ENCODE measurements at regions of chr12 and their contacts with region 1.

Region 1: DNA sequence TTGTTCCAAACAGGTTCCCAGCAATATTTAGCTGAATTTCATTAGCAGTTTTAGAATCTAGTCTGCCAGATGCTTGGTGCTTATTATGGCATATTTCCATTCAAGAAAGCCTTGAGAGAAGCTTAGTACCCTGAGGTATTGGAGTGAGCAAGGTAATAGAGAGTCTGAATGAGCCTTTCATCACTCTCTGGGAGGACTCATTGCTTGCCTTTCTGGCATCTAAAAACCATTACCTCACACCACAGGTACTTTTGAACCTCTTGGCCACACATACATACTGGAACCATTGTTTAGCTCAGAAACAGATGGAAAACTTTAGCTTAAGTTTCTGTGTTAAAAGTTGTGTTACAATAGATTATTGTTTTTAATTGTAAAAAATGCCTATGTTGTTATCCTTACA is 27.4 kb upstream of the KCNH3 start:
- DNase-seq: no peak
- H3K4me3 ChIP-seq: no peak overlapping the region
- H3K27ac ChIP-seq: no peak overlapping the region
- H3K4me1 ChIP-seq: no peaks in the 10 kb centered on the region
- H3K27me3 ChIP-seq: no peaks in the 10 kb centered on the region
- CTCF ChIP-seq: no peak
- POLR2A ChIP-seq: no peak

Region 2: DNA sequence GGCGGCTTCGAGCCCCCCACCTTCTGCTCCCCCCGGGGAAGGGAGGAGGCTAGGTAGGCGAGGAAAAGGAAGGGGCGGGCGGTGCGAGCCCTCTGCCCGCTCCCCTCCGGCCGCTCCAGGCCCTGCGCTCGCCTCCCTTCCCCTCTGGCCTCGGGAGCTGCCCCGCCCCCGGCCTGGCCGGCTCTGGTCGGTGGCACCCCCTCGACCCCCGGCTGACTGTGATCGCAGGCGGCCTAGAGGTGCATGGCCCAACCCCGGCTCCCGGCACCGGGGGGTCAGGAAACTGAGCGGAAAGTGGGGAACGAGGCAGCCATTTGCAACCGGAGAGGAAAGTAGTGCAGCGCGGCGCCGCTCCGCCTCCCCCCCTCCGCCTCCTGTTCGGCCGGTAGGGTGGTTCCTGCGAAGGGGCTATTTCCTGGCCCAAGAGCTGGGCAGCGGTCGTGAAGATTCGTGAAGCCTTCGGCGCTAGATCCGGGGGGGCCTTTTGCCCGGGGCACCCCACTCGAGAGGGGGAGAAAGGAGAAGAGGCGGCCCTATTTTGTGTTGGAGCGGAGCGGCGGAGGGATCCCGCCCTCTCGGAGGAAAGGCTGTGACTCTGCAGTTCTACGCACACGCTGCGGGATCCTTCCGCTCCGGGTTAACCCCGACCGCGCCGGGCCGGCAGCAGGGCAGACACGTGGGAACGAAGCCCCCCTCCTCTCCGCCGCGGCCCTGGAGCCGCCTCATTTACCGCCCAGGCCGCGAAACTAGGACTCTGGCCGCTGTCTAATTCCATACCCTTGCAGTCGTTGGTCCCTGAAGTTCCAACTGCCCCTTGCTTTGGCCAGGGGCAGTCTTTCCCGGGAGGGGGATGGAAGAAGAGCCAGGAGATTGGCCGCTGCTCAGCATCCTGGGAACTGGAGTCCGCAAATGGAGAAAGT is 450.9 kb before region 1 on chr12 and contains the start of gene KMT2D:
- intact Hi-C with region 1: no loop called
- DNase-seq: peak; percentile 89
- H3K4me3 ChIP-seq: peak within 1 kb of the TSS; percentile 78 to 88
- H3K27ac ChIP-seq: peak within 1 kb of the TSS; percentile 96 to 97
- H3K4me1 ChIP-seq: peaks cover 18% of the 10 kb centered on the region
- H3K27me3 ChIP-seq: no peaks in the 10 kb centered on the region
- CTCF ChIP-seq: peak in 3 of 4 experiments; percentile 20 to 61 (median 36)
- POLR2A ChIP-seq: peak; percentile 37
- total RNA-seq, gene KMT2D: 82.7 to 99.7 TPM

Region 3: GRCh38 chr12:49288412-49288853 is 223.0 kb before region 1 on chr12:
- intact Hi-C with region 1: loop called (anchors 5 kb)
- DNase-seq: peak; percentile 34
- H3K4me3 ChIP-seq: no peak overlapping the region
- H3K27ac ChIP-seq: no peak overlapping the region
- H3K4me1 ChIP-seq: no peaks in the 10 kb centered on the region
- H3K27me3 ChIP-seq: no peaks in the 10 kb centered on the region
- CTCF ChIP-seq: peak; percentile 51 to 85 (median 77)
- POLR2A ChIP-seq: no peak

Region 4: DNA sequence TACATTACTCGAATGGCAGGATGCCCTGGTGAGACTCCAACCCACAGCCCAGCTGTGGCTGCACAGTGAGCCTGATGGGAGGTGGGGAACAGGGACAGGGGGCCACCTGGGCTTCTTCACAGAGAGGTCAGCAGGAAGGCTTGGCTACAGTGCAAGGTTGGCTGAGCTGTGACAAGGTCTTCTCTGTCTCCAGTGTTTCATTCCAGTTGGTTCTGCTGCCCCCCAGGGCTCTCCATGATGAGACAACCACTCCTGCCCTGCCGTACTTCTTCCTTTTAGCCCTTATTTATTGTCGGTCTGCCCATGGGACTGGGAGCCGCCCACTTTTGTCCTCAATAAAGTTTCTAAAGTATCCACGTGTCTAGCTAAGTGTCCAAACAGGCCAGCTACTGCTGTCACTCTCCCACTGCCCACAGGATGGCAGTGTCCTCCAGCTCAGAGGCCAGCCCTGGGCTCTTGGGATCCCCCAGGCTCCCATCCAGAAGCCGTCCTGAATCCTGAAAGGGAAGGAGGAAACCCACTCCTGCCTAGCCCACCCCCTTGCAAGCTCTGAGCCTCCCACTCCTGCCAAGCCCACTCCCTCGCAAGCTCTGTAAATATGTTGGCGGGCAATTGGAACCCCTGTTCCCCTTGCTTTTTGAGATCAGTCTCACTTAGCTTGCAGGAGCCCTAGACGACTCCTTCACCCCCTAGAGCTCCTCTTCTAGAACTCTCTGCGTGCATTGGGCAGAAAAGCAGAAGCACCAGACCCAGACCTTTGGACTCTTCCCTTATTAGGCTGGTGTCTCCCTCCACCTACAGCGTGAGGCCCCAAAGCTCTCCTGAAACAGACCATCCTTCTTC is 179.8 kb before region 1 on chr12:
- intact Hi-C with region 1: loop called (anchors 5 kb)
- DNase-seq: peak; percentile 87
- H3K4me3 ChIP-seq: no peak overlapping the region
- H3K27ac ChIP-seq: no peak overlapping the region
- H3K4me1 ChIP-seq: peaks cover 4% of the 10 kb centered on the region
- H3K27me3 ChIP-seq: peaks cover 12% of the 10 kb centered on the region
- CTCF ChIP-seq: peak; percentile 68 to 95 (median 88)
- POLR2A ChIP-seq: no peak

Region 5: DNA sequence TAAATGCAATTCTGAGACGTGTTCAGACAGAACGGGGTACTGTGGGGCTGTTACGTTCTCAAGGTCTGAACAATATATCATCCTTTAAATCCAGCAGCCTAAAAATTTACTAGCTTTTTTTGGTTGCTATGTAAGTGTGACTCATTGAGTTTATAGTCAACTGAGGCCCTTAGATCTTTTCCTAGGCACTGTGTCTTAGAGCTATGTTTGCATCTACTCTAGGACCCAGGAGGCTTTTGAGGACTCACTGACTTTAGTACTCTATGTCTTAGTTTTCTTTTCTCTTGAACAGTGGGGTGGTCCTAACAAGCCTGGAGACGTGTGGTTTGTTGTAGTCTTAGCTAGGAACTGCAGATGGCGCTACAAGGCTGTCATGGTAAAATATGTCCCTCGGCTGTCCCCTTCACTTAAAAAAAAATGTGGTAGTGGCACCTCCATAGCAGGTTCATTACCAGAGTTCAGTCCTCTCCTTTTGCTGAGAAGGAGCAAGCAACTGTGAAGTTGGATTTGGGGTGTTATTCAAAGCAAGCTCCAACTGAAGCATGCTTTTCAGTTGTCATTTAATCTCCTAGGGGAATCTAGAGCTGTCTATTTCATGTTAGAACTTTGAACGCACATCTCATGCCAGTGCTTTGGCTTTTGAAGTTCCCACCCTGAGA is 152.8 kb before region 1 on chr12:
- intact Hi-C with region 1: loop called (anchors 5 kb)
- DNase-seq: no peak
- H3K4me3 ChIP-seq: no peak overlapping the region
- H3K27ac ChIP-seq: no peak overlapping the region
- H3K4me1 ChIP-seq: no peaks in the 10 kb centered on the region
- H3K27me3 ChIP-seq: no peaks in the 10 kb centered on the region
- CTCF ChIP-seq: peak; percentile 42 to 83 (median 74)
- POLR2A ChIP-seq: no peak